Activated CD4-positive, alpha-beta T cell treated with anti-CD3 and anti-CD28 coated beads for 36 hours (primary cell): ENCODE measurements at regions of chr21 and their contacts with region 1.

Region 1: GRCh38 chr21:33924079-33924765 is 8.6 kb upstream of the ATP5PO start:
- DNase-seq: peak; percentile 96
- ATAC-seq: peak; percentile 94
- H3K4me3 Mint-ChIP-seq: no peak overlapping the region
- H3K27ac Mint-ChIP-seq: peak overlapping the region; percentile 51
- H3K4me1 Mint-ChIP-seq: peaks cover 12% of the 10 kb centered on the region
- H3K27me3 Mint-ChIP-seq: no peaks in the 10 kb centered on the region

Region 2: DNA sequence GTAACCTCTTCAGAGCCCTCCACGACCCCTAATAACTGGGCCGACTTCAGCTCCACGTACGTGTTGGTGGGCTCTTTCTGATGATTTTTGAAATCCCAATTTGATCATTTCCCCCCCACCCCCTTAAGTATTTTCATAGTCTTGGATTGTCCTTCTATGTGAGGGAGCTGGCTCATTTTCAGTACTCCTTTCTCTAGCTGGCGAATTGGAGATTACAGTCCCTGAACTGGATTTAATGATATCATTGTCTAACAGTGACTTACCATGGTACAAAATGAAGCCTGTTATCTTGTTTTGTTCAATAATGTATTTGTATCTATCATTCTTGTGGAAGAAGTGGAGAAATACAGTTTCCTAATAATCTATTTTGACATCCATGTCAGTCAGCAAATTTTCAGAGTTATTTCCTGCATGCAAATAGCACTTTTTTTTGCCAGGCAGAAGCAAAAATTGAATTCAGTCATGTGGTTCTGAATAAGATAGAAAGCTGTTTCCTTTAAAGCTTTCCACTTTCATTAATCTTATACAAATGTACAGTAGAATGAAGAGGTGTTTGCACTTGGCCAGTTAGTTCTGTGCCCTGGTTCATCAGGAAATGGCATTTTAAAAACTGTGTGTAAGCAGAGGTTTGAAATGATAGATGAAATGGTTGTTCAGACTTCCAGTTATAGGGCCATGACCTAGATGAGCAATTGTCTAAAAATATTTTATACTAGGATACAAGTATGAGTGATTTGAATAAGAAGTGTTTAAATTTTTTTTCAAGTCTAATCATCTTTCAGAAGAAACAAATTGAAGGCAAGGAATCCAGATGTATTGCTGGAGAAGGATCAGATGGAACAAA is 112.8 kb before region 1 on chr21:
- CTCF ChIA-PET with region 1: no interaction called
- POLR2A ChIA-PET with region 1: no interaction called
- intact Hi-C with region 1: no loop called
- DNase-seq: no peak
- ATAC-seq: no peak
- H3K4me3 Mint-ChIP-seq: no peak overlapping the region
- H3K27ac Mint-ChIP-seq: no peak overlapping the region
- H3K4me1 Mint-ChIP-seq: peaks cover 5% of the 10 kb centered on the region
- H3K27me3 Mint-ChIP-seq: no peaks in the 10 kb centered on the region

Region 3: DNA sequence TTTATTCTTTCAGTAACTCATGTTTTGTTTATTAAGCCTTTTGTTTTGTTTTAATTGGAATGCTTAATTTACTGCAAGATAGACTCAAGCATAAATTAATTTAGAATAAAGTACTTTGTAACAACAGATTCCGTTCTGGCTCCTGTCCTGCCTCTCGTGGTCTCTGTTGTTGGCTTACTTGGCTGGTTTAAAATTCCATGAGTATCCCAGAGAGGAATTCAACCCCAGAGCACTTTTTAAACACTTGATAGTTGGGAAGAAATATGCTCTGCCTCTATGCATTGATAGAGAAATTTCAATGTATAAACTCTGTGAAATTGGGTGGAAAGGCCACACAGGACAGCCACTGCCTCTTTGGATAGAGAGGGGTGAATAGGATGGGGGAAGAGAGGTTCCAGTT is 98.3 kb before region 1 on chr21:
- CTCF ChIA-PET with region 1: no interaction called
- POLR2A ChIA-PET with region 1: no interaction called
- intact Hi-C with region 1: no loop called
- DNase-seq: no peak
- ATAC-seq: no peak
- H3K4me3 Mint-ChIP-seq: no peak overlapping the region
- H3K27ac Mint-ChIP-seq: no peak overlapping the region
- H3K4me1 Mint-ChIP-seq: no peaks in the 10 kb centered on the region
- H3K27me3 Mint-ChIP-seq: no peaks in the 10 kb centered on the region

Region 4: DNA sequence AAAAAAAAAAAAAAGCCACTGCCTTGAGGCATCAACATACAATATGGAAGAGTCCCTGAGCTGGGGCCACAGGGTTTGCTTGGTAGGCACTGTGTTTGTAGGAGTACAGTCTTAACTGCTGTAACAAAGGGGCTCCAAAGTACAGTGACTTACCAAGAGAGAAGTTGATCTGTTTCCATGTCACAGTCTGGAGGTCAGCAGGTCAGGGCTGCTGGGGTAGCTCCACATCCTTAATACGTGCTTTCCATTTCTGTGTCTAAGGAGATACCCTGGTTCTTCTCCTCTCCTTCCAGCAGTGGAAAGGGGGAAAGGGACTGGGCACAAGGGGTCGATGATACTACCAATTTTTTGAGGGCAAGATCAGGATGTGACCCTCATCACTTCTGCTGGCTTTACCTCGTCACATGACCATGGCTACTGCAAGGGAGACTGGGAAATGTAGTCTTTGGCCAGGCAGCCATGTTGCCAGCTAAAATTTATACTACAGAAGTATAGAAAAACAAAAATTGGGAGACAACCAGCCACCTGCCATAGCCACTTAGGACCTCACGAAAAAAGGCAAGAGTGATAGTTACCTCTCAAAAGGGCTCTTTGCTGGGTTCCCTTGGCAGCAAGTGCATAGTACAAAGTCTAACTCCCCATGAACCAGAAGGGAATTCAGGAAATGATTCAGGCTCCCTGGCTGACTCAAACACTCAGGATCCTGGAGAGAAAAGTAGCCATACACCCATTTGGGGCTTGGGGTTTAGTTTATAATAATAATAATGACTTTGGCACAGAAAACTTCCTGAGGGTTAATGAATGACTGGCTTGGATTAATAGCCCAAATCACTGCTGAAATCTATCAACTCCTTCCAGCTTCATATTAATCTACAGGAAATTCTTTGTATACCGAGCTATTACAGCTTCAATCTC is 44.1 kb after region 1 on chr21:
- CTCF ChIA-PET with region 1: interaction called, 24 read pairs
- POLR2A ChIA-PET with region 1: no interaction called
- intact Hi-C with region 1: no loop called
- DNase-seq: peak; percentile 38
- ATAC-seq: peak; percentile 60
- H3K4me3 Mint-ChIP-seq: no peak overlapping the region
- H3K27ac Mint-ChIP-seq: peak overlapping the region; percentile 7
- H3K4me1 Mint-ChIP-seq: peaks cover 21% of the 10 kb centered on the region
- H3K27me3 Mint-ChIP-seq: no peaks in the 10 kb centered on the region

Region 5: DNA sequence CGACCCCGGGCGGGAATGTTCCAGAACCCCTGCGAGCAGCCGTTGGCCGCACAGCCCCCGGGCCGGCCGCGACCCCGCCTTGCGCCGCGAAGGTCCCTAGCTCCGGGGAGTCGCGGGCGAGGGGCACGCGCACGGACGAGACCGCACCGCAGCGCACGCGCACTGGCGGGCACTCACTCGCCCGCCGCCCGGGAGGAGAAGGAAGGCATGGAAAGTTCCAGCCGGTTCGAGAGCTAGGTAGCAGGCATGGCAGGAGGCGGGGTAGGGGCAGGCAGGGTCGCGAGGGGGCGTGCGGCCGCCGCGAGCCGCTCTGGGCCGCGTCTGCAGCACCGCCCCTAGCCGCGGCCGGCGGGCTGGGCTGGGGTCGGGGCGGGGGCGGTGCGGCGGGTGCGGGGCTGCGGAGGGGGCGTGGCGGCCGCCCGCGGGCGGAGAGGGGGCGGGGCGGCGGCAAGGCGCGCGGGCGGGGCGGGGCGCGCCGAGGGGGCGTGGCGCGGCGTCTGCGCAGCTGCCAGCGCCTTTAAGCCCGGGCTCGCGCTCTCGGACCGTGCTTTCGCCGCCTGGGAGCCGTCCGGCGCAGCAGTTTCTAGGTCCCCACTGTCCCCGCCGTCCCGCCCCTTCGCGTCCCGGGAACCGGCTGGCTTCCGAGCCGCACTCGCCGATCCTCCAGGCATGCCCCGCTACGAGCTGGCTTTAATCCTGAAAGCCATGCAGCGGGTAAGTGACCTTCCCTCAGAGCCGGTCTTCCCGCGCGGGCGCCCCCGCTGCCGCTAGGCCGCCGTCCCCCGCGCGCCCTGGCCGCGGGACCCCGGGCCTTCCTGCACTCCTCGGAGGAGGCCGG is 149.0 kb after region 1 on chr21 and contains the starts of genes MRPS6 and SLC5A3:
- CTCF ChIA-PET with region 1: interaction called, 10 read pairs
- POLR2A ChIA-PET with region 1: no interaction called
- intact Hi-C with region 1: loop called (anchors 1 to 2 kb)
- DNase-seq: peak; percentile 81
- ATAC-seq: peak; percentile 66
- H3K4me3 Mint-ChIP-seq: peak within 1 kb of the TSS; percentile 96
- H3K27ac Mint-ChIP-seq: peak within 1 kb of the TSS; percentile 92
- H3K4me1 Mint-ChIP-seq: peaks cover 38% of the 10 kb centered on the region
- H3K27me3 Mint-ChIP-seq: no peaks in the 10 kb centered on the region
- total RNA-seq, gene MRPS6: 102 to 117 TPM
- total RNA-seq, gene SLC5A3: 18.2 to 22.9 TPM

Region 6: GRCh38 chr21:34129039-34129891 is 205.0 kb after region 1 on chr21:
- CTCF ChIA-PET with region 1: interaction called, 10 read pairs
- POLR2A ChIA-PET with region 1: no interaction called
- intact Hi-C with region 1: loop called (anchors 5 kb)
- DNase-seq: peak; percentile 87
- ATAC-seq: peak; percentile 94
- H3K4me3 Mint-ChIP-seq: peak overlapping the region; percentile 60
- H3K27ac Mint-ChIP-seq: peak overlapping the region; percentile 94
- H3K4me1 Mint-ChIP-seq: peaks cover 89% of the 10 kb centered on the region
- H3K27me3 Mint-ChIP-seq: no peaks in the 10 kb centered on the region

Region 7: DNA sequence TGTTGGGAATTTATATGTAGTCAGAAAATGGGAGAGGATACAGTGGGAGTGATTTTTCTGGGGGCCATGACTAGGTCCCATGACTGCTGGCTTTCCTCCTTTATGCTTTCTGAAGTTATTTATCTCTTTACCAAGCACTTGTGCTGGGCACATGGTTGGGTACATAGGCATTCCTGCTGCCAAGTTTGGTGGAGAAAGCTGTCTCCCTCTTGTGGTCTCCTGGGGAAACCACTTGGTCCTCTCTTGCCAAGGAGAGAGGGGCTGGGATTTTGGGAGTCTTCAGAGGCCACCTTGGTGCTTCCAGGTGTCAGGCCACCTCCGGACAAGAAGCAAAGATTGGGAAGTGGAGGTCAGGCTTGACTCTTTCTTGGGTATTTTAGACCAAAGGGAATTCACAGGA is 319.3 kb after region 1 on chr21:
- CTCF ChIA-PET with region 1: interaction called, 7 read pairs
- POLR2A ChIA-PET with region 1: no interaction called
- intact Hi-C with region 1: loop called (anchors 1 to 5 kb)
- DNase-seq: peak; percentile 52
- ATAC-seq: peak; percentile 30
- H3K4me3 Mint-ChIP-seq: no peak overlapping the region
- H3K27ac Mint-ChIP-seq: peak overlapping the region; percentile 55
- H3K4me1 Mint-ChIP-seq: no peaks in the 10 kb centered on the region
- H3K27me3 Mint-ChIP-seq: no peaks in the 10 kb centered on the region

Region 8: DNA sequence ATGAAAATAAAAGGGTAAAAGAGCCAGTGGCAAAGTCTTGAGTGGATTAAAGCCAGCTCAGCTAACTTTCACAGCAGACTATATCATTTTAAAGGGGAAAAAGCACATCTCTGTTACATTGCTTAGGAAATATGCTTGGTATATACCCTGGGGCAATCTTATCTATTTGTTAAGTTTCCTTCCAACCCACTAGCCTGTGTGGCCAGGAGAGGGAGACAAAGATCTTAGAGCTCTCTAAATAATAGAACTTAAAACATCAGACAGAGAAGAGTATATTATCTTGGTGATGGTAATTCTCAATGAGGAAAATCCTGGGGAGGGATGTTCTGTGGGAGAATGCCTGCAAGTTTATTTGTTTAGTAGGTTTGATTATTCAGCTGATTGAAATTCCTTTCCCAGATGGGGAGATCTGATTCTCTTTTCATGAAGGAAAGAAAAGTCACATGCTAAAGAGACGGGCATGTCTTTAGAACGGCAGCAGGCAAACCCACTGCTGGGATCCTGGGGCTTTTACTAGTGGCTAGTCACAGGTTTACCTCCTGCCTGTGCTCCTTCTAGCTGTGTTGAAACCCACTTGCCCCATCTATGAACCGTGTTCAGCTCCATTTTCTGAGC is 443.2 kb after region 1 on chr21:
- CTCF ChIA-PET with region 1: interaction called, 10 read pairs
- POLR2A ChIA-PET with region 1: no interaction called
- intact Hi-C with region 1: no loop called
- DNase-seq: peak; percentile 61
- ATAC-seq: peak; percentile 49
- H3K4me3 Mint-ChIP-seq: no peak overlapping the region
- H3K27ac Mint-ChIP-seq: no peak overlapping the region
- H3K4me1 Mint-ChIP-seq: no peaks in the 10 kb centered on the region
- H3K27me3 Mint-ChIP-seq: peaks cover 5% of the 10 kb centered on the region